ENCODE measurements at regions of chr10 and their contacts with region 1.

Region 1: DNA sequence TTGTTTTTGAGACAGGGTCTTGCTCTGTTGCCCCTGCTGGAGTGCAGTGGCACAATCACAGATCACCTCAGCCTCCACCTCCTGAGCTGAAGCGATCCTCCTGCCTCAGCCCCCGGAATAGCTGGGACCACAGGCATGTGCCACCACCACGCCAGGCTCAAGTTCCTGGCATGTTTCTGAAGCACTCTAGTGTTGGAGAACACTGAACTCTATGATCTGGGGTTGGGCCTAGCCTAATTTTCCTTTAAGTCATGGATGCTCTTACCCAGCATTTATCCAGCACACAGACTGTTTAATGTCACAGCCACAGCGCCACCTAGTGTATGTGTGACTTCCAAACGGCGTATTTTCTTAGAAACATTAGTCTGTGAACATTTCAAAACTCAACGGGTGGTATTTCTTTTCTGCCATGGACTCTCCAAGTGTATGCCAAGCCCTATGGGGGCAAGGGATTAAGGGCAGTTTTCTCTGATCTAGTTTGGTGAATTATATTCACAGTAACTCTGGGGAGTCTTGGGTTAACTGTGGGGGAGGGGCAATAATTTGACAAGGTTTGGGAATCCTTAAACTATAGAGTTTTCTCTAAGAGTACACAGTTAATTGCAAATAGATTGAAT is 91.8 kb downstream of the CREM start:
- DNase-seq: peak; percentile 90 to 91
- ATAC-seq: peak; percentile 85
- H3K4me3 ChIP-seq: no peak overlapping the region
- H3K27ac ChIP-seq: no peak overlapping the region
- H3K4me1 ChIP-seq: no peaks in the 10 kb centered on the region
- H3K27me3 ChIP-seq: no peaks in the 10 kb centered on the region

Region 2: GRCh38 chr10:34397324-34397723 is 821.1 kb before region 1 on chr10:
- intact Hi-C with region 1: no loop called
- DNase-seq: no peak
- ATAC-seq: peak; percentile 19
- H3K4me3 ChIP-seq: no peak overlapping the region
- H3K27ac ChIP-seq: no peak overlapping the region
- H3K4me1 ChIP-seq: peaks cover 0 to 3% of the 10 kb centered on the region in 2 donors
- H3K27me3 ChIP-seq: no peaks in the 10 kb centered on the region

Region 3: GRCh38 chr10:34994565-34995142 is 223.8 kb before region 1 on chr10:
- intact Hi-C with region 1: loop called in 1 of 2 experiments (anchors 10 kb)
- DNase-seq: no peak
- ATAC-seq: no peak
- H3K4me3 ChIP-seq: no peak overlapping the region
- H3K27ac ChIP-seq: no peak overlapping the region
- H3K4me1 ChIP-seq: no peaks in the 10 kb centered on the region
- H3K27me3 ChIP-seq: no peaks in the 10 kb centered on the region

Region 4: GRCh38 chr10:35119378-35119777 is 99.1 kb before region 1 on chr10:
- intact Hi-C with region 1: loop called (anchors 1 to 2 kb)
- DNase-seq: no peak
- ATAC-seq: no peak
- H3K4me3 ChIP-seq: no peak overlapping the region
- H3K27ac ChIP-seq: no peak overlapping the region
- H3K4me1 ChIP-seq: no peaks in the 10 kb centered on the region
- H3K27me3 ChIP-seq: no peaks in the 10 kb centered on the region

Region 5: DNA sequence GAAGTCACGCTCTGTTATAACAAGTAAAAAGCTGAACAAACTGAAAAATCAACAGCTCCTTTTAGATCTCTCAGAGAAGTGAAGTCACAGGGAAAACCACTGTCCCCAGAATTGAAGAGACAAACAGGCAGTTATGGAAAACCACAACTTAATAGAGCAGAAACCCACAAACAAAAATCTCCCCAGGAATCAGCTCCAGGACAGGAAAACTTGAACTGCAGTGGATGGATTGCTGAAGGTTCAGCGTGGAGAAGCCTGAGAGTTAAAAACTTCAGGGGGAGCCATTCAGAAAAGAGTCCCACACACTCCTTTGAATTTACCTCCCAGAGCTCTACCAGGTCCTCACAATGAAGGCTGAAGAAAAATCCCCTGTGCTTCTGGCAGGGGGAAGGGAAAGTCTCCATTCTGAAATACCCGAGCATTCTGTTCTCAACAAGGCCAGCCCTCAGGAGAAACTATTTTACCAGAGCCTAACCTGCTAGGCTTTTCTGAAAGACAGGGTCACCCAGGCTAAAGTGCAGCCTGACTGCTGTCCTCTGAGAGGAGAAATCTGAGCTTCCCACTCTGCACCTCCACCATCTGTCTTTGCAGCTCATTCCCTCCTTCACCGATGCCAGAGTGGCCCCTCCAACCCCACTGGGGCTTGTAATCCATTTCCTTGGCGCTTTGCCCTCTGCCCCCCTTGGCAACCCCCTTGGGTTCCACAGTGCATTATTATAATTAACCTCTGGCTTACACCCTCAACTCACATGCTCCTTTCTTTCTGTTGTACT is 52.8 kb after region 1 on chr10:
- intact Hi-C with region 1: no loop called
- DNase-seq: no peak
- ATAC-seq: no peak
- H3K4me3 ChIP-seq: no peak overlapping the region
- H3K27ac ChIP-seq: no peak overlapping the region
- H3K4me1 ChIP-seq: no peaks in the 10 kb centered on the region
- H3K27me3 ChIP-seq: no peaks in the 10 kb centered on the region